ENCODE measurements at regions of chr2 and their contacts with region 1.

Region 1: GRCh38 chr2:29841386-29842004 is 79.9 kb downstream of the ALK start:
- DNase-seq: peak; percentile 59
- ATAC-seq: no peak
- H3K4me3 ChIP-seq: no peak overlapping the region
- H3K27ac ChIP-seq: no peak overlapping the region
- H3K4me1 ChIP-seq: peaks cover 12% of the 10 kb centered on the region; the same call in 1 of the 2 replicates
- H3K27me3 ChIP-seq: no peaks in the 10 kb centered on the region
- CTCF ChIP-seq: peak; percentile 92

Region 2: GRCh38 chr2:29295857-29296256 is 545.6 kb before region 1 on chr2:
- CTCF ChIA-PET with region 1: no interaction called
- POLR2A ChIA-PET with region 1: no interaction called
- intact Hi-C with region 1: loop called (anchors 1 kb)
- DNase-seq: peak; percentile 61
- ATAC-seq: peak; percentile 82
- H3K4me3 ChIP-seq: no peak overlapping the region
- H3K27ac ChIP-seq: no peak overlapping the region
- H3K4me1 ChIP-seq: no peaks in the 10 kb centered on the region
- H3K27me3 ChIP-seq: 0 out of 2 replicates have a peak, but pooled peaks cover 10% of the 10 kb centered on the region
- CTCF ChIP-seq: peak; percentile 78

Region 3: GRCh38 chr2:29309090-29310029 is 532.1 kb before region 1 on chr2:
- CTCF ChIA-PET with region 1: no interaction called
- POLR2A ChIA-PET with region 1: no interaction called
- intact Hi-C with region 1: loop called (anchors 1 kb)
- DNase-seq: peak; percentile 76
- ATAC-seq: peak; percentile 82
- H3K4me3 ChIP-seq: no peak overlapping the region
- H3K27ac ChIP-seq: no peak overlapping the region
- H3K4me1 ChIP-seq: no peaks in the 10 kb centered on the region; the same call in 1 of the 2 replicates
- H3K27me3 ChIP-seq: no peaks in the 10 kb centered on the region
- CTCF ChIP-seq: peak; percentile 87

Region 4: GRCh38 chr2:29644949-29645348 is 196.5 kb before region 1 on chr2:
- CTCF ChIA-PET with region 1: no interaction called
- POLR2A ChIA-PET with region 1: no interaction called
- intact Hi-C with region 1: loop called (anchors 5 kb)
- DNase-seq: peak; percentile 27
- ATAC-seq: no peak
- H3K4me3 ChIP-seq: no peak overlapping the region
- H3K27ac ChIP-seq: no peak overlapping the region
- H3K4me1 ChIP-seq: peaks cover 2% of the 10 kb centered on the region; the same call in 1 of the 2 replicates
- H3K27me3 ChIP-seq: no peaks in the 10 kb centered on the region
- CTCF ChIP-seq: peak; percentile 51; the same call in 1 of the 2 replicates

Measured in PC-3 (cell line).